ENCODE measurements at regions of chr5 and their contacts with region 1.

Region 1: DNA sequence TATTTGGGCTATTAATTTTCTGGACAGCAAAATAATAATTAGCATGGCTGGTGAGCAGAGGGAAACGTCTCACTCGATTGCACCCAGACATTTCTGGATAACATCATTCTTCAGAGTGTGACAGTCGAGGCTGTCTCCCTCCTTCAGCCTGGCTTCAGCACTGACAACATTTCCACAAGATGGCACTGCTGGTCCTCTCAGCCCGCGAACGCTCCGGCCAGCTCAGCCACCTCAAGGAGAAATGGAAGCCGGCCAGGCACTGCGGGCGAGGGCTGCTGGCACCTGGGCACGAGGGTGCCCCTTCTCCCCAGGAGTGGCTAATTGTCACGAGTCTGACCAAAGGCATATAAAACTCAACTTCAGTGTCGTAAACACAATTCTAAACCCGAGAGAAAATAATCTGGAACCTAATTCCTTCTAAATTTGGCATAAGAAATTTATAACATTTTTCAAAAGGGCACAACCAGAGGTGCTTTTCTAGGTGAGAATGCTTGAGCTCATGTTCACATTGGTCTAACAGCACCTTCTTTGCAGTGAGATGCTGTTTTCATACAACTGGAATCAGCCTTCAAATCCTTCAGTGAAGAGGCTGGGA is 65.9 kb downstream of the DAP start:
- DNase-seq: peak; percentile 71 to 75
- ATAC-seq: peak; percentile 81 to 92 (median 88)
- H3K4me3 ChIP-seq: no peak overlapping the region
- H3K27ac ChIP-seq: no peak overlapping the region
- H3K4me1 ChIP-seq: peaks cover 0 to 18% (median 10%) of the 10 kb centered on the region in 9 donors
- H3K27me3 ChIP-seq: no peaks in the 10 kb centered on the region
- CTCF ChIP-seq: peak; percentile 42 to 88 (median 79)

Region 2: GRCh38 chr5:10801931-10802659 is 106.9 kb after region 1 on chr5:
- intact Hi-C with region 1: loop called in 3 of 10 experiments (anchors 5 to 10 kb)
- DNase-seq: no peak
- ATAC-seq: peak in 2 of 8 donors; percentile 51 to 58
- H3K4me3 ChIP-seq: no peak overlapping the region
- H3K27ac ChIP-seq: no peak overlapping the region
- H3K4me1 ChIP-seq: no peaks in the 10 kb centered on the region
- H3K27me3 ChIP-seq: peaks cover 0 to 8% (median 0%) of the 10 kb centered on the region in 7 donors
- CTCF ChIP-seq: peak in 5 of 9 donors; percentile 9 to 39 (median 31)

Region 3: GRCh38 chr5:10876006-10876744 is 181.0 kb after region 1 on chr5:
- intact Hi-C with region 1: no loop called
- DNase-seq: no peak
- ATAC-seq: peak in 2 of 8 donors; percentile 18 to 38
- H3K4me3 ChIP-seq: no peak overlapping the region
- H3K27ac ChIP-seq: no peak overlapping the region
- H3K4me1 ChIP-seq: peaks cover 0 to 13% (median 0%) of the 10 kb centered on the region in 9 donors
- H3K27me3 ChIP-seq: peaks cover 0 to 9% (median 0%) of the 10 kb centered on the region in 7 donors
- CTCF ChIP-seq: no peak

Region 4: GRCh38 chr5:10987930-10988504 is 292.9 kb after region 1 on chr5:
- intact Hi-C with region 1: loop called in 2 of 10 experiments (anchors 10 kb)
- DNase-seq: peak; percentile 75 to 77
- ATAC-seq: peak; percentile 80 to 94 (median 88)
- H3K4me3 ChIP-seq: no peak overlapping the region
- H3K27ac ChIP-seq: peak overlapping the region in 5 of 10 donors; percentile 44 to 85 (median 77)
- H3K4me1 ChIP-seq: peaks cover 3 to 25% (median 11%) of the 10 kb centered on the region in 9 donors
- H3K27me3 ChIP-seq: peaks cover 0 to 9% (median 0%) of the 10 kb centered on the region in 7 donors
- CTCF ChIP-seq: peak; percentile 53 to 81 (median 74)

Region 5: DNA sequence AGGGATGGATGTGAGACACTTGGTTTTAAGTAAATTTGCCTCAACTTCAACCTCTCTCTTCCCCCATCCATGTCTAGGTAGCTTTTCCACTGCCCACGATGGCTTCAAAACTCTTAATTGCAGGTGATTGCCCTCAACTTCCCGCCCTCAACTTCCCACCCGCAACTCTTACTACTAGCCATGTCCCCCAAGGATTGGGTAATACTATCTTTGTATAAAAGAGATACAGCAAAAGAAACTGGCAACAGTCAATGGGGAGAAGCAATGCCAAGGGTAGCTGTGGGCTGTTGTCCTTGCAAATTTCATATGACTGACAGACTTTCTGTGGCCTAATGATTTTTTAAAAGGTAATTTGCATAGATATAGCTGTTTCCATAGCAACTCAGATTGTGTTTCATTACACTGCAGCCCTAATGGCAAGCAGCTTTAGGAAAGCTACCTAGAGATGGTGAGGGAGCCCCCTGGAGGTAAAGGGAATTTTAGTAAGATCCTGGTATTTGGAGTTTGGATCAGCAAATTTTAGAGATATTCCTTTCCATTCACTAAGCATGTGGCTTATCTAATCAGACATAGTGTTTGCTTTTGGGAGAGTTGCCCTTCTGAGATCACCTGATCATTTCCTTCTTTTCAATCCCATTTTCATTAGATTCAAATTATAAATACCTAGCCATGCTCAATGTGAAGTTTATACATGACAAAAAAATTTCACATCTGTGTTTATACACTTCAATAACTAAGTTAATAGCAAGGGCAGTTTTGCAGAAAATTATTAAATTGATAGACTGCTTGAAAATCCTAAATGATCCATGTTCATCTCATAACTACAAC is 487.5 kb after region 1 on chr5:
- intact Hi-C with region 1: loop called in 5 of 10 experiments (anchors 5 to 10 kb)
- DNase-seq: no peak
- ATAC-seq: peak in 2 of 8 donors; percentile 22 to 29
- H3K4me3 ChIP-seq: no peak overlapping the region
- H3K27ac ChIP-seq: no peak overlapping the region
- H3K4me1 ChIP-seq: peaks cover 0 to 7% (median 0%) of the 10 kb centered on the region in 9 donors
- H3K27me3 ChIP-seq: no peaks in the 10 kb centered on the region
- CTCF ChIP-seq: peak in 8 of 9 donors; percentile 22 to 60 (median 48)

Region 6: DNA sequence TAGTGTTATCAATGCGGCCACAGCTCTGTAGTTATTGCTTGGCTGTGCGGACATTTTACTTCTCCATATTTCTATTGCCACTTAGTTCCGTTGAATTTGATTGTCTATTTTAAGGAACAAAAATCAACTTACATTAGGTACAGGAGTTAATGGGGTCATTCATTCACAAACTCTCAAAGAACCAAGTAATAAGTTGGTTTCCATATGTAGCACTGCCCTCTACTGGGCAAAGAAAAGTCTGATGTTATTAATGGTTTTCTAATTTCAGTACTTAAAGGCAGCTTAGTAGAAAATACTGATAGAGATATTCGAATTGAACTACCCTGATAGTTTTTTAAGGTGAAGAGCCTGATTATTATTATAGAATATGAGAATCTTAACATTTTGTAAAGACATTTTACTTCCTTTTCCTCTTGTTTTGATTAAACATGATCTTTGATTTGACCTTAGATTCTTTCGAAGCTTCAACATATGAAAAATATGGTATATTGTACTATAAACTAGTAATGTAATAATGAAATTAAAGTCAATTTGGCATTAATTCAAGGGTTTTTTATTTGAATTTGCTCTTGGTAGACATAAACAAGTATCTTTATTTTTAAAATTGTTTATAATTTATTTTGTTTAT is 1328.6 kb after region 1 on chr5:
- intact Hi-C with region 1: loop called in 2 of 10 experiments (anchors 10 kb)
- DNase-seq: no peak
- ATAC-seq: no peak
- H3K4me3 ChIP-seq: no peak overlapping the region
- H3K27ac ChIP-seq: no peak overlapping the region
- H3K4me1 ChIP-seq: no peaks in the 10 kb centered on the region
- H3K27me3 ChIP-seq: no peaks in the 10 kb centered on the region
- CTCF ChIP-seq: peak in 8 of 9 donors; percentile 31 to 72 (median 59)